GM12878 (cell line): ENCODE measurements at regions of chr6 and their contacts with region 1.

Region 1: DNA sequence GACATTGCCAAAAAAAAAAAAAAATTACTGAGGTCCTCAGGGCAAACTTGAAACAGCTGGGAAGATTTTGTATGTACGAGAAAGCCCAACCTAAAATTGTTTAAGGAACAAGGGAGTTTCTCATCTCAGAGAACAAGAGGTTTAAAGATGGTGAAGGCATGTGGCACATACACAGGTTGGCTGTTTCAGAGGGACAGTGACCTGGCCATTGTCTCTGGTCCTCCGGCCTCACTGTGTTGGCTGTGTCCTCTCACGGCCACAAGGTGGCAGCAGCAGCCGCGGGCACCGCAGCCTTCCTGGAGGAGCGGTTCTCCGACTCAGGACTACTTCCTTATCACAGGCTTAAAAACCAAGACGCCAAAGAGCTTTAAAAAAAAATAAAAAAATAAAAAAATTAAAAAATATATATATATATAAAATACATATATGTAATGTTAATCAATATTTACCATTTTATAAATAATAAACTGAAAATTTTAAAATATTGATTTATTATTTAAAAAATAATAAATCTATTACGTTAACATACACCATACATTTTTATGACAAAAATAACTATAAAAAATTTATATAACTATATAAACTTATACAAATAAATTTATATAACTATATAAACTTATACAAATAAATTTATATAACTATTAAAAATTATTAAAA is 52.8 kb downstream of the GTF2H5 start:
- DNase-seq: no peak
- ATAC-seq: peak; percentile 100
- H3K4me3 ChIP-seq: no peak overlapping the region
- H3K27ac ChIP-seq: no peak overlapping the region
- H3K4me1 ChIP-seq: no peaks in the 10 kb centered on the region
- H3K27me3 ChIP-seq: no peaks in the 10 kb centered on the region
- CTCF ChIP-seq: peak; percentile 85 to 95 (median 93); a peak in 5 of 6 replicates
- EP300 ChIP-seq: no peak
- POLR2A ChIP-seq: no peak
- RAD21 ChIP-seq: peak; percentile 100

Region 2: GRCh38 chr6:158009114-158009891 is 211.6 kb before region 1 on chr6:
- CTCF ChIA-PET with region 1: no interaction called
- POLR2A ChIA-PET with region 1: no interaction called
- RAD21 ChIA-PET with region 1: no interaction called
- SMC1A ChIA-PET with region 1: no interaction called
- in situ Hi-C with region 1: no loop called
- intact Hi-C with region 1: no loop called
- DNase-seq: no peak
- ATAC-seq: no peak; the same call in 2 of the 3 replicates
- H3K4me3 ChIP-seq: 0 out of 2 replicates have a peak overlapping the region, but pooled peaks have one; percentile 8
- H3K27ac ChIP-seq: peak overlapping the region; percentile 1; the same call in 1 of the 2 replicates
- H3K4me1 ChIP-seq: peaks cover 42% of the 10 kb centered on the region
- H3K27me3 ChIP-seq: no peaks in the 10 kb centered on the region
- CTCF ChIP-seq: no peak
- EP300 ChIP-seq: no peak
- POLR2A ChIP-seq: no peak
- RAD21 ChIP-seq: no peak

Region 3: GRCh38 chr6:158387036-158387435 is 166.1 kb after region 1 on chr6:
- CTCF ChIA-PET with region 1: interaction called, 13 read pairs
- POLR2A ChIA-PET with region 1: no interaction called
- RAD21 ChIA-PET with region 1: interaction called, 6 read pairs
- SMC1A ChIA-PET with region 1: interaction called, 3 read pairs
- in situ Hi-C with region 1: no loop called
- intact Hi-C with region 1: loop called (anchors 5 kb)
- DNase-seq: no peak
- ATAC-seq: peak; percentile 45
- H3K4me3 ChIP-seq: no peak overlapping the region
- H3K27ac ChIP-seq: no peak overlapping the region
- H3K4me1 ChIP-seq: no peaks in the 10 kb centered on the region; the same call in 1 of the 2 replicates
- H3K27me3 ChIP-seq: no peaks in the 10 kb centered on the region
- CTCF ChIP-seq: peak in 2 of 3 experiments; percentile 4 to 15; a peak in 1 of 6 replicates
- EP300 ChIP-seq: no peak
- POLR2A ChIP-seq: no peak
- RAD21 ChIP-seq: no peak; the same call in 1 of the 2 replicates

Region 4: DNA sequence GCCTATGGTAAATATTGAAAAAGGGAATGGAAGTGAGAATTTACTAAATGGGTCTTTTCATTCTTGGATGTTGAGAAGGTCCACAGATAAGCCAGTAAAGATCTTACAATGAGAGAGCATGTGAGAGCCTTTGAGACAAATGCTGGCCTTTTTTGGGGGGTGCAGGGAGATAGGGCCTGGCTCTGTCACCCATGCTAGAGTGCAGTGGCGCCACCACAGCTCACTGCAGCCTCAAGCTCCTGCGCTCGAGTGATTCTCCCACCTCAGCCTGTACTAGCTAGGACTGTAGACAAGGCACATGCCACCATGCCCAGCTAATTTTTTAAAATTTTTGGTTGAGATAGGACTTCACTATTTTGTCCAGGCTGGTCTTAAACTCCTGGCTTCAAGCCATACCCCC is 275.8 kb after region 1 on chr6:
- CTCF ChIA-PET with region 1: interaction called, 23 read pairs
- POLR2A ChIA-PET with region 1: no interaction called
- RAD21 ChIA-PET with region 1: interaction called, 10 read pairs
- SMC1A ChIA-PET with region 1: interaction called, 6 read pairs
- in situ Hi-C with region 1: no loop called
- intact Hi-C with region 1: no loop called
- DNase-seq: no peak
- ATAC-seq: peak; percentile 51; the same call in 1 of the 3 replicates
- H3K4me3 ChIP-seq: no peak overlapping the region
- H3K27ac ChIP-seq: no peak overlapping the region
- H3K4me1 ChIP-seq: no peaks in the 10 kb centered on the region
- H3K27me3 ChIP-seq: no peaks in the 10 kb centered on the region
- CTCF ChIP-seq: peak in 2 of 3 experiments; percentile 8 to 12; a peak in 1 of 6 replicates
- EP300 ChIP-seq: no peak
- POLR2A ChIP-seq: no peak
- RAD21 ChIP-seq: peak; percentile 26; the same call in 1 of the 2 replicates

Region 5: DNA sequence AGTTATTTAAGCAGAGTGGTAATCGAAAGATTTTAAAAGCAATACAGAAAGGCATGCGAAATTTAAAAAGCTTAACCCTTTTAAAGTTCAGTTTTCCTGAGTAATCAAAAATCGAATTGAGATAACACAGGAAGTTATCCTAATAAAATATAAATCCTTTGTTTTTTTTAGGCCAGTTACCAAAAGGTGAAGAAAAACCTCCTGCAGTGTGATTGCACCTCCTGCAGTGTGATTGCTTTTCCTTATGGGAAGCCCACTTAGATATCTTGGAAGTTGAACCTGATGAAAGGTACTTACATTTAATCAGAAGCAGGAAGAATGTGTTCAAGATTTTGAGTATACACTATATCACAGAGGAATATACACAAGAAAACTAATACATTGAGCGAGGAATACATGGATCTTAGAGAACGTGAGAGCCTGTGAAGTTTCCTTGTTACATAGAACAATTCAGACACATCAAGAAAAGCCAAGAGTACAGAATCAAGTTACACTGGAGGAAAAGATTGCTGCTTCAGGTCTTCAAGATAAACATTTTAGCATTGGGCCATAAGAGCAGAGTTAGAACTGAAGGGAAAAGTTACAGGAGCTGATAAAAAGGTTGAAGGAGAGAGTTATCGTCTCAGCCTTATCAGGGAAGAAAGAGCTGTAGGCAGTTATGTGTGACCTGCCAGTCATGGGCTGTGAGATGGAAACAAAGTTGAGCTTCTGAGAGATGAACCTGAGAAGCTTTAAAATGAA is 331.3 kb after region 1 on chr6:
- CTCF ChIA-PET with region 1: interaction called, 22 read pairs
- POLR2A ChIA-PET with region 1: no interaction called
- RAD21 ChIA-PET with region 1: interaction called, 3 read pairs
- SMC1A ChIA-PET with region 1: interaction called, 13 read pairs
- in situ Hi-C with region 1: no loop called
- intact Hi-C with region 1: no loop called
- DNase-seq: no peak
- ATAC-seq: peak; percentile 29; the same call in 2 of the 3 replicates
- H3K4me3 ChIP-seq: no peak overlapping the region
- H3K27ac ChIP-seq: no peak overlapping the region
- H3K4me1 ChIP-seq: no peaks in the 10 kb centered on the region
- H3K27me3 ChIP-seq: no peaks in the 10 kb centered on the region
- CTCF ChIP-seq: no peak
- EP300 ChIP-seq: no peak
- POLR2A ChIP-seq: no peak
- RAD21 ChIP-seq: no peak

Region 6: GRCh38 chr6:158595223-158595622 is 374.3 kb after region 1 on chr6:
- CTCF ChIA-PET with region 1: interaction called, 68 read pairs
- POLR2A ChIA-PET with region 1: interaction called, 3 read pairs
- RAD21 ChIA-PET with region 1: interaction called, 7 read pairs
- SMC1A ChIA-PET with region 1: interaction called, 5 read pairs
- in situ Hi-C with region 1: loop called (anchors 5 kb)
- intact Hi-C with region 1: no loop called
- DNase-seq: no peak
- ATAC-seq: peak; percentile 58; the same call in 2 of the 3 replicates
- H3K4me3 ChIP-seq: no peak overlapping the region
- H3K27ac ChIP-seq: no peak overlapping the region
- H3K4me1 ChIP-seq: no peaks in the 10 kb centered on the region
- H3K27me3 ChIP-seq: no peaks in the 10 kb centered on the region
- CTCF ChIP-seq: peak; percentile 19 to 30 (median 25); a peak in 4 of 6 replicates
- EP300 ChIP-seq: no peak
- POLR2A ChIP-seq: no peak
- RAD21 ChIP-seq: peak; percentile 16; the same call in 1 of the 2 replicates

Region 7: DNA sequence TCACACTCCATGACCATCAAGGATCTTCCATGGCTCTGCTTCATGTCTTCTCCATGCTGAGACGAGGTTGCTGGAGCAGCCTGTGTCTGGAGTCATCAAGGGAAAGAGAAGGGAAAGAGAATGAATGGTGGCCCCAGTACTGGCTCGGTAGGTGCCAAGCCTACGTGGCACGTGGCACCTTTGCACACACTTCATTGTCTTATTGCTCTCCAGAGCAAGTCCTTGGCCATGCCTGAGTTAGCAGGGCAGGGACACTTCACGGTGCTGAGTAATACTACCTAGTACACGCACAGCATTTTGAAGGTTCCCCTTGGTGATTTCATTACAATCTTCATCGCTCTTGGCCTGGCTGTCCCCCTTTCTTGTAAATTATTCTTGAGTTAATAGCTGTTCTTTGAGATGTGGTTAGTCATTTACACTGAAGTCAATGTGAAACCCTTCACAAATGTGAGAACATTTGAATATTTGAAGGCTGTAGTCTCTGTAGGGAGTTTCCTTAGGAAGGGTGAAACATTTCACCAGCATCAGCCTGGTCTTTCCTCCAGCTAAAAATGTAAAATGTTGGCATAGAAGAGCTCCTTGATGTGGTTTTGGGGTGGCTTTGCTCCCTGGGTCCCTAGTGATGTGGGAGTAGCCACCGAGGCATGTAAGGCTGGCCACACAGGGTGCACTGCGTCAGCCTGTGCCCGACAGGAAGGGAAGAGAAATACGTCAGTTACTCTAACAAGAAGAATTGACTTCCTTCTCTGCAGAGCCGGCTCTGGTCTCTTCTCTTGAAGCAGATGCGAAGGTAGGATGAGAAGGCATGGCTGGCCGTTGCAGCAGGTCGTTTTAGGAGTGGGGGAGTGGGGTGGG is 428.6 kb after region 1 on chr6 and contains the start of gene SYTL3:
- CTCF ChIA-PET with region 1: interaction called, 7 read pairs
- POLR2A ChIA-PET with region 1: interaction called, 4 read pairs
- RAD21 ChIA-PET with region 1: interaction called, 3 read pairs
- SMC1A ChIA-PET with region 1: interaction called, 11 read pairs
- in situ Hi-C with region 1: no loop called
- intact Hi-C with region 1: no loop called
- DNase-seq: peak; percentile 95
- ATAC-seq: peak; percentile 71
- H3K4me3 ChIP-seq: peak within 1 kb of the TSS; percentile 45; the same call in 1 of the 2 replicates
- H3K27ac ChIP-seq: peak within 1 kb of the TSS; percentile 76
- H3K4me1 ChIP-seq: peaks cover 43% of the 10 kb centered on the region
- H3K27me3 ChIP-seq: no peaks in the 10 kb centered on the region
- CTCF ChIP-seq: no peak
- EP300 ChIP-seq: peak; percentile 31 to 85; a peak in 3 of 4 replicates
- POLR2A ChIP-seq: peak; percentile 55
- RAD21 ChIP-seq: no peak
- polyA plus RNA-seq, gene SYTL3: 3.3 to 4.2 TPM